PC-3 (cell line): ENCODE measurements at regions of chr2 and their contacts with region 1.

Region 1: GRCh38 chr2:167134381-167135072 is 246.2 kb downstream of the XIRP2 start:
- DNase-seq: peak; percentile 92
- ATAC-seq: peak; percentile 94
- H3K4me3 ChIP-seq: peak overlapping the region; percentile 13; the same call in 1 of the 2 replicates
- H3K27ac ChIP-seq: peak overlapping the region; percentile 94
- H3K4me1 ChIP-seq: peaks cover 55% of the 10 kb centered on the region
- H3K27me3 ChIP-seq: no peaks in the 10 kb centered on the region
- CTCF ChIP-seq: no peak

Region 2: GRCh38 chr2:166867874-166868514 is 266.5 kb before region 1 on chr2:
- CTCF ChIA-PET with region 1: no interaction called
- POLR2A ChIA-PET with region 1: no interaction called
- intact Hi-C with region 1: no loop called
- DNase-seq: no peak
- ATAC-seq: no peak
- H3K4me3 ChIP-seq: no peak overlapping the region
- H3K27ac ChIP-seq: no peak overlapping the region
- H3K4me1 ChIP-seq: peaks cover 4% of the 10 kb centered on the region
- H3K27me3 ChIP-seq: no peaks in the 10 kb centered on the region
- CTCF ChIP-seq: no peak

Region 3: GRCh38 chr2:167151894-167152293 is 17.4 kb after region 1 on chr2:
- CTCF ChIA-PET with region 1: no interaction called
- POLR2A ChIA-PET with region 1: no interaction called
- intact Hi-C with region 1: loop called (anchors 2 kb)
- DNase-seq: no peak
- ATAC-seq: no peak
- H3K4me3 ChIP-seq: no peak overlapping the region
- H3K27ac ChIP-seq: no peak overlapping the region
- H3K4me1 ChIP-seq: peaks cover 6% of the 10 kb centered on the region; the same call in 1 of the 2 replicates
- H3K27me3 ChIP-seq: no peaks in the 10 kb centered on the region
- CTCF ChIP-seq: no peak

Region 4: GRCh38 chr2:167181134-167181533 is 46.6 kb after region 1 on chr2:
- CTCF ChIA-PET with region 1: no interaction called
- POLR2A ChIA-PET with region 1: no interaction called
- intact Hi-C with region 1: loop called (anchors 1 kb)
- DNase-seq: peak; percentile 90
- ATAC-seq: peak; percentile 94
- H3K4me3 ChIP-seq: no peak overlapping the region
- H3K27ac ChIP-seq: peak overlapping the region; percentile 90
- H3K4me1 ChIP-seq: peaks cover 21% of the 10 kb centered on the region
- H3K27me3 ChIP-seq: no peaks in the 10 kb centered on the region
- CTCF ChIP-seq: no peak

Region 5: GRCh38 chr2:167192833-167193232 is 58.3 kb after region 1 on chr2:
- CTCF ChIA-PET with region 1: no interaction called
- POLR2A ChIA-PET with region 1: no interaction called
- intact Hi-C with region 1: loop called (anchors 2 kb)
- DNase-seq: peak; percentile 95
- ATAC-seq: peak; percentile 86
- H3K4me3 ChIP-seq: peak overlapping the region; percentile 26; the same call in 1 of the 2 replicates
- H3K27ac ChIP-seq: peak overlapping the region; percentile 78
- H3K4me1 ChIP-seq: peaks cover 55% of the 10 kb centered on the region
- H3K27me3 ChIP-seq: no peaks in the 10 kb centered on the region
- CTCF ChIP-seq: no peak

Region 6: GRCh38 chr2:167212014-167212648 is 77.6 kb after region 1 on chr2:
- CTCF ChIA-PET with region 1: no interaction called
- POLR2A ChIA-PET with region 1: no interaction called
- intact Hi-C with region 1: loop called (anchors 2 kb)
- DNase-seq: peak; percentile 90
- ATAC-seq: peak; percentile 72
- H3K4me3 ChIP-seq: no peak overlapping the region
- H3K27ac ChIP-seq: no peak overlapping the region
- H3K4me1 ChIP-seq: 0 out of 2 replicates have a peak, but pooled peaks cover 5% of the 10 kb centered on the region
- H3K27me3 ChIP-seq: no peaks in the 10 kb centered on the region
- CTCF ChIP-seq: peak; percentile 91

Region 7: GRCh38 chr2:167253025-167253424 is 118.5 kb after region 1 on chr2:
- CTCF ChIA-PET with region 1: no interaction called
- POLR2A ChIA-PET with region 1: no interaction called
- intact Hi-C with region 1: loop called (anchors 1 kb)
- DNase-seq: peak; percentile 94
- ATAC-seq: peak; percentile 99
- H3K4me3 ChIP-seq: no peak overlapping the region
- H3K27ac ChIP-seq: peak overlapping the region; percentile 59
- H3K4me1 ChIP-seq: peaks cover 25% of the 10 kb centered on the region
- H3K27me3 ChIP-seq: no peaks in the 10 kb centered on the region
- CTCF ChIP-seq: no peak

Region 8: GRCh38 chr2:167279810-167280209 is 145.3 kb after region 1 on chr2:
- CTCF ChIA-PET with region 1: no interaction called
- POLR2A ChIA-PET with region 1: no interaction called
- intact Hi-C with region 1: no loop called
- DNase-seq: no peak
- ATAC-seq: no peak
- H3K4me3 ChIP-seq: no peak overlapping the region
- H3K27ac ChIP-seq: no peak overlapping the region
- H3K4me1 ChIP-seq: no peaks in the 10 kb centered on the region
- H3K27me3 ChIP-seq: 0 out of 2 replicates have a peak, but pooled peaks cover 8% of the 10 kb centered on the region
- CTCF ChIP-seq: no peak